ENCODE measurements at regions of chr6 and their contacts with region 1.

Region 1: GRCh38 chr6:76861403-76861802 is 601.9 kb downstream of the HTR1B start:
- DNase-seq: peak; percentile 21
- ATAC-seq: peak; percentile 97
- H3K4me3 ChIP-seq: no peak overlapping the region
- H3K27ac ChIP-seq: no peak overlapping the region
- H3K4me1 ChIP-seq: no peaks in the 10 kb centered on the region
- H3K27me3 ChIP-seq: no peaks in the 10 kb centered on the region
- CTCF ChIP-seq: peak; percentile 64
- EP300 ChIP-seq: no peak
- POLR2A ChIP-seq: no peak
- RAD21 ChIP-seq: 0 out of 2 replicates have a peak, but pooled peaks have one; percentile 19

Region 2: DNA sequence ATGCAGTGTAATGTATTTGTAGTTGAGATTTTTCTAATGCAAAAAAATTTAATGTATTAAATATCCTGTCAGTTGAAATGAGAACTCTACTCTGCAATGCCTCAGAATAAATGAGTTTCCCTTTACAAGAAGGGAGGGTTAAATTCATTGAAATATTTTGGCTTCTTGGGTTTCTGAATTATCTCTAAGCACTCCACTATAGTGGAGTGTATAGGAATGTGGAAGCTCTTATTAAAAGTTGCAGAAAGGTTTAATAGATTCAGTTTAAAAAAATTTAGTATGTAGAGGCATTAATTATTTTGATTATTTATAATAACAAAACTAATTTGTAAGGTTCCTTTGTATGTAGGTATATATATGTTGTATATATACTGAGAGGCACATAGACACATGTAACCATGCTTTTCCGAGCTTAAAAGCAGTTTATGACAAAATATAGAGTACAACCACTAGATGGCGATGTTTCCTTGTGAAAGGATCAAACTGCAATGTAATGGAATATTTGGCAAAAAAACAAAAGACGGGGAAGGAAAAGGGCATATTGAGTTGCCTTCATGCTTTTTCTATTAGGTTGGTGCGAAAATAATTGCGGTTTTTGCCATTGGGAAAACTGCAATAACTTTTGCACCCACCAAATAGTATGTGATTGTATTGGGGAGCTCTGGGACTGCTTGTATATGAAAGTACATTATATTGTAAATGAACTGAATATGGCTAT is 968.2 kb before region 1 on chr6:
- CTCF ChIA-PET with region 1: interaction called, 7 read pairs
- POLR2A ChIA-PET with region 1: no interaction called
- in situ Hi-C with region 1: no loop called
- intact Hi-C with region 1: loop called (anchors 1 kb)
- DNase-seq: peak; percentile 61
- ATAC-seq: peak; percentile 81
- H3K4me3 ChIP-seq: no peak overlapping the region
- H3K27ac ChIP-seq: no peak overlapping the region
- H3K4me1 ChIP-seq: no peaks in the 10 kb centered on the region
- H3K27me3 ChIP-seq: no peaks in the 10 kb centered on the region
- CTCF ChIP-seq: peak; percentile 75
- EP300 ChIP-seq: no peak
- POLR2A ChIP-seq: no peak
- RAD21 ChIP-seq: peak; percentile 57; the same call in 1 of the 2 replicates

Region 3: DNA sequence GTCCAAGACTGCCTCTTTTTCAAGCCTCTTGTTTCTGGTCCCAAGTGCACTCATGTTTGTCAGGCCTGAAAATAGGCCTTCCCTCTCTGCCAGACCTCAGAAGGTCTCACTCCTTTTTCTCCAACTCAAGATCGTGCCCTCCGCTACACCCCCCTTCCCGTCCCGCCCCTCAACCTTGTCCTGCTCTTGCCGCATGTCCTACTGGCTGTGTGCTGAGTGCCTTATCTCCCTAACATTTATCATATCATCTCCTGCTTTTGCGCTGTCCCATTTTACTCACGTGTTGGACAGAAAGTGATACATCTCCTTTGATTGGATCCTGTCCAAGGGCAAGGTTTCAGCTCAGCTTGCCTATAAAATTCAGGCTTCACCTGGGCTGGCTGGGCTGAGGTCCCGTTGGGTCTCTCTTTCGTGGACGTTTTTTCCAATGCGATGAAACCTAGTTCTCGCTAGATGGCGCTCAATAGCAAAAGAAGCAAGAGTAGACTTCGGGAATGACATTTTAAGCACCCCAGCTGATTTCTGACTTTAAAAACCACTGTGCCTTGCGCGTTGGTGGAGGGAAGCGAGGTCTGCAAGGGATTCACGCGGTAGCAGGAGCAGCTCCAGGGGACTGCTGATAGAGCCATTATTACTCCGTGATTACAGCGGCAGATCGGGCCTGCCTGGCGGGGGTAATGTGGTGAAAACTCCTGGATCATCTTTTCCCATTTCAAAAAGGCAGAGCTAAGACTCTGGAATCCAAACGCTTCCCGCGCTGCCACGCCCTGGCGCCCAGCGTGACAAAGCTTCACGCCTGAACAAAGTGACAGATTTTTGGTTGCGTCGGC is 926.5 kb before region 1 on chr6:
- CTCF ChIA-PET with region 1: no interaction called
- POLR2A ChIA-PET with region 1: no interaction called
- in situ Hi-C with region 1: loop called (anchors 25 kb)
- intact Hi-C with region 1: loop called (anchors 5 kb)
- DNase-seq: peak; percentile 70
- ATAC-seq: peak; percentile 81
- H3K4me3 ChIP-seq: peak overlapping the region in 1 of 3 experiments; percentile 53; a peak in 1 of 6 replicates
- H3K27ac ChIP-seq: no peak overlapping the region
- H3K4me1 ChIP-seq: peaks cover 14% of the 10 kb centered on the region; the same call in 1 of the 2 replicates
- H3K27me3 ChIP-seq: peaks cover 0 to 3% of the 10 kb centered on the region in 2 experiments; a peak in 1 of 5 replicates
- CTCF ChIP-seq: peak; percentile 85
- EP300 ChIP-seq: no peak
- POLR2A ChIP-seq: no peak
- RAD21 ChIP-seq: peak; percentile 62

Region 4: GRCh38 chr6:76682842-76683241 is 178.6 kb before region 1 on chr6:
- CTCF ChIA-PET with region 1: interaction called, 4 read pairs
- POLR2A ChIA-PET with region 1: no interaction called
- in situ Hi-C with region 1: loop called (anchors 25 kb)
- intact Hi-C with region 1: loop called (anchors 2 kb)
- DNase-seq: peak; percentile 2
- ATAC-seq: no peak
- H3K4me3 ChIP-seq: no peak overlapping the region
- H3K27ac ChIP-seq: no peak overlapping the region
- H3K4me1 ChIP-seq: no peaks in the 10 kb centered on the region
- H3K27me3 ChIP-seq: no peaks in the 10 kb centered on the region; a peak in 1 of 5 replicates
- CTCF ChIP-seq: no peak
- EP300 ChIP-seq: no peak
- POLR2A ChIP-seq: no peak
- RAD21 ChIP-seq: no peak

Region 5: DNA sequence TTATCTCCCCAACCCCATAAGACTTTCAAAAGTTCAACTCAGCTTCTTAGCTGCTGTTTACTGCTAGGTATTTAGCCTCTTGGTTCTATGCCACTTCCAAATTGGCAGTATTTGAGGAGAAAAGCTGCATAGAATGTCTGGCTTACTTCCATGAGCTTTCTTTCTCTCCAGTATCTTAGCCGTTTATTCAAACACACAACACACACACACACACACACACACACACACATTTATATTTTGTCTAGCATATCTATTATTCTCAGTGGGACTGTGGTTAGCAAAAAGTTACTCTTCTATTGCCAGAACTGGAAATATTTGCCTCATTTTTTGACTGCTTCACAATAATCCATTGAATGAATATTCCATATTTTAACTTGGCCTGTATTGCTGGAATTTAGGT is 154.8 kb before region 1 on chr6:
- CTCF ChIA-PET with region 1: interaction called, 3 read pairs
- POLR2A ChIA-PET with region 1: no interaction called
- in situ Hi-C with region 1: no loop called
- intact Hi-C with region 1: loop called (anchors 5 kb)
- DNase-seq: no peak
- ATAC-seq: no peak
- H3K4me3 ChIP-seq: no peak overlapping the region
- H3K27ac ChIP-seq: no peak overlapping the region
- H3K4me1 ChIP-seq: no peaks in the 10 kb centered on the region
- H3K27me3 ChIP-seq: no peaks in the 10 kb centered on the region
- CTCF ChIP-seq: no peak
- EP300 ChIP-seq: no peak
- POLR2A ChIP-seq: no peak
- RAD21 ChIP-seq: no peak

Region 6: GRCh38 chr6:76752841-76753240 is 108.6 kb before region 1 on chr6:
- CTCF ChIA-PET with region 1: no interaction called
- POLR2A ChIA-PET with region 1: no interaction called
- in situ Hi-C with region 1: no loop called
- intact Hi-C with region 1: loop called (anchors 10 kb)
- DNase-seq: no peak
- ATAC-seq: no peak
- H3K4me3 ChIP-seq: no peak overlapping the region
- H3K27ac ChIP-seq: no peak overlapping the region
- H3K4me1 ChIP-seq: no peaks in the 10 kb centered on the region
- H3K27me3 ChIP-seq: no peaks in the 10 kb centered on the region
- CTCF ChIP-seq: no peak
- EP300 ChIP-seq: no peak
- POLR2A ChIP-seq: no peak
- RAD21 ChIP-seq: no peak